ENCODE measurements at regions of chr5 and their contacts with region 1.

Region 1: DNA sequence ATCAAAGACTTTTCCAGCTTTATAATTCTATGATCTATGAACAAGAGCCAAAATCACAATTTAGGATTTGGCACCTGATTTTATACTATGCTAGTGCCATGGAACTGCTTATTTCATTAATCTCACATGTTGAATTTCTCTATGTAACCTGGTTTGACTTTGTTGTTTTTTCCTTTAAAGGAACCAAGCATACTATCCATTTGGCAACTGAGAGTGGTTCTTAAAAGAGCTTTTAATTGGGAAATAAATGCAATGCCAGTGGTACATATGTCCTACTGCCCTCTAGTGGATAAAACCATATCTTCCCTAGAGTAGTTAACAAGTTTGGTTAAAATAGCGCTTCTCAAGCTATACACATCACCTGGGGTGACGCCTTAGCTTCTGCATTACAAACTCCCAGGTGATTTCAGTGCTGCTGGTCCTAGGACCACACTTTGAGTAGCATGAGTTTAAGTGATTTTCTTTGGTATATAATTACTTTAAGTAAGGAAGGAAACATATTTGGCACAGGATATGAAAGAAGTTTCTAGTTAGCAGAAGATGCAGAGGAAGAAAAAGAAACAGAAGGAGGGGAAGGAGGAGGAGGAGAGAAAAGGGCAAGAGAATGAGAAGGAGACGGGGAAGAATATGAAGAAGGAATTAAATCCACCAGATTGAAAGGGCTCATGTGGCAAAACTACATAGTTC is 56.8 kb downstream of the FGF10 start:
- H3K4me3 ChIP-seq: no peak overlapping the region
- H3K27ac ChIP-seq: no peak overlapping the region
- H3K4me1 ChIP-seq: no peaks in the 10 kb centered on the region
- CTCF ChIP-seq: no peak

Region 2: GRCh38 chr5:43729846-43730478 is 602.5 kb before region 1 on chr5:
- CTCF ChIA-PET with region 1: interaction called, 44 read pairs
- POLR2A ChIA-PET with region 1: no interaction called
- H3K4me3 ChIP-seq: no peak overlapping the region
- H3K27ac ChIP-seq: no peak overlapping the region
- H3K4me1 ChIP-seq: no peaks in the 10 kb centered on the region
- CTCF ChIP-seq: peak; percentile 33; the same call in 1 of the 2 replicates

Region 3: DNA sequence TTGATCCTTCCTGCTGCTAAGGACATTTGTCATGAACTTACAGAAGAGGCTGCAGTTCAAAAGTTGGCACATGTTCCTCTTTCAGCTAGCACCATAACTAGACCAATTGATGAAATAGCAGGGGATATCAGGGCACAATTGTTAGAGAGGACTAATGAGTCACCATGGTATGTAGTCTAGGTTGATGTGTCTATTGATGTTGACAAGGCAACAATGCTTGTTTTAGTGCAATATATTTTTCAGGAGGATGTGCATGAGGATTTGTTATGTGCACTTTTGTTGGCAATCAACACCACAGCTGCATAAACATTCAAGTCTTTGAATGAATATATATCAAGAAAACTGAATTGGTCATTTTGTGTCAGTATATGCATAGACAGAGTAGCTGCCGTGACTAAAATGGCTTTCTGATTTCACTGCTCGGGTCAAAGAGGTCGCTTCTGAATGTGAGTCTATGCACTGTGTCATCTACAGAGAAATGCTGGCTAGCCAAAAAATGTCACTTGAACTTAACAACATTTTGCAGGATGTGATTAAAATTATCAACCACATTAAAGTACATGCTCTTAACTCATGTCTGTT is 11.2 kb before region 1 on chr5:
- CTCF ChIA-PET with region 1: interaction called, 12 read pairs
- POLR2A ChIA-PET with region 1: no interaction called
- H3K4me3 ChIP-seq: no peak overlapping the region
- H3K27ac ChIP-seq: no peak overlapping the region
- H3K4me1 ChIP-seq: no peaks in the 10 kb centered on the region
- CTCF ChIP-seq: no peak

Region 4: GRCh38 chr5:44345871-44346270 is 13.4 kb after region 1 on chr5:
- CTCF ChIA-PET with region 1: interaction called, 21 read pairs
- POLR2A ChIA-PET with region 1: no interaction called
- H3K4me3 ChIP-seq: no peak overlapping the region
- H3K27ac ChIP-seq: no peak overlapping the region
- H3K4me1 ChIP-seq: no peaks in the 10 kb centered on the region
- CTCF ChIP-seq: no peak

Measured in HEK293 (cell line).